Calu3 (cell line): ENCODE measurements at regions of chr3 and their contacts with region 1.

Region 1: DNA sequence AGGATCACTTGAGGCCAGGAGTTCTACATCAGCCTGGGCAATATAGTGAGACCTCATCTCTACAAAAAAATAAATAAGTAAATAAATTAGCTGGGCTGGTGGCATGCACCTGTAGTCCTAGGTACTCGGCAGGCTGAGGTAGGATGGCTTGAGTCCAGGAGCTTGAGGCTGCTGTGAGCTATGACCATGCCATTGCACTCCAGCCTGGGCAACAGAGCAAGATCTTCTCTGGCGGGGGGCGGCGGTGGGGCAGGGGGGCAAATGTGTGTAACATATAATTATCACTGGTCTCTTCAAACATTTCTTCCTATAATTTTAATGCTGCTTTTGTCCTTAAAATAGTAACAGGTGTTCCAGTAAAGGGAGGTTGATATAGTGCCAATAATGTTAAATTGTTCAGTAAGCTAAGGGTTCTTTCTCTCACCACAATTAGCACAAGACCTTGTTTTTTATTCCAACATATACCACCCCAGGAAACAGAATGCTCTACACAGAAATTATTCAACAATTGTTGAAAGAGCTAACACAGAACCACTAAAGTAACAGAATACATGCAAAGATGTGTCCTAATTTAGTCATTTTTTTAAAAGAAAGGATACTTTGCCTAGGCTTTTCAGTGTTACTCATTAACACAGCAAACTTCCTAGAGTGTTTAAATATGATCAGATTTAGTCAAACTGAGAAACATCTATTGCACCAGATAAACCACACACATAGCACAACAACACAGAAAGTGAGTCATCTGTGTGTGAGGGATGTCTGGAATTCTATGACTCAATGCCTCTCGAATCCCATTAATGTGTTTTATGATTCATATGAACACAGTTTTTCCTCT is 29.1 kb downstream of the ANKRD28 start:
- DNase-seq: peak; percentile 41
- H3K4me3 Mint-ChIP-seq: peak overlapping the region; percentile 26
- H3K27ac Mint-ChIP-seq: peak overlapping the region; percentile 81
- H3K4me1 Mint-ChIP-seq: peaks cover 33% of the 10 kb centered on the region
- H3K27me3 Mint-ChIP-seq: no peaks in the 10 kb centered on the region
- CTCF ChIP-seq: no peak

Region 2: GRCh38 chr3:15797642-15798303 is 29.1 kb after region 1 on chr3 and contains the start of gene ANKRD28:
- CTCF ChIA-PET with region 1: interaction called, 4 read pairs
- intact Hi-C with region 1: loop called (anchors 2 kb)
- DNase-seq: peak; percentile 20
- H3K4me3 Mint-ChIP-seq: peak within 1 kb of the TSS; percentile 60
- H3K27ac Mint-ChIP-seq: peak within 1 kb of the TSS; percentile 75
- H3K4me1 Mint-ChIP-seq: peaks cover 9% of the 10 kb centered on the region
- H3K27me3 Mint-ChIP-seq: no peaks in the 10 kb centered on the region
- CTCF ChIP-seq: no peak
- total RNA-seq, gene ANKRD28: 54.2 and 57.7 TPM in 2 replicates